PC-9 (cell line): ENCODE measurements at regions of chr21 and their contacts with region 1.

Region 1: GRCh38 chr21:36069713-36070573 is at the start of gene CBR1:
- DNase-seq: peak; percentile 76 to 86
- H3K4me3 ChIP-seq: peak within 1 kb of the TSS; percentile 78
- H3K27ac ChIP-seq: peak within 1 kb of the TSS; percentile 79
- H3K4me1 ChIP-seq: peaks cover 21% of the 10 kb centered on the region
- H3K27me3 ChIP-seq: no peaks in the 10 kb centered on the region
- CTCF ChIP-seq: no peak
- total RNA-seq, gene CBR1: 80.2 and 89.7 TPM in 2 replicates

Region 2: GRCh38 chr21:35366394-35367080 is 703.4 kb before region 1 on chr21:
- CTCF ChIA-PET with region 1: no interaction called
- POLR2A ChIA-PET with region 1: no interaction called
- intact Hi-C with region 1: no loop called
- DNase-seq: no peak
- H3K4me3 ChIP-seq: no peak overlapping the region
- H3K27ac ChIP-seq: no peak overlapping the region
- H3K4me1 ChIP-seq: peaks cover 6% of the 10 kb centered on the region
- H3K27me3 ChIP-seq: no peaks in the 10 kb centered on the region
- CTCF ChIP-seq: no peak

Region 3: DNA sequence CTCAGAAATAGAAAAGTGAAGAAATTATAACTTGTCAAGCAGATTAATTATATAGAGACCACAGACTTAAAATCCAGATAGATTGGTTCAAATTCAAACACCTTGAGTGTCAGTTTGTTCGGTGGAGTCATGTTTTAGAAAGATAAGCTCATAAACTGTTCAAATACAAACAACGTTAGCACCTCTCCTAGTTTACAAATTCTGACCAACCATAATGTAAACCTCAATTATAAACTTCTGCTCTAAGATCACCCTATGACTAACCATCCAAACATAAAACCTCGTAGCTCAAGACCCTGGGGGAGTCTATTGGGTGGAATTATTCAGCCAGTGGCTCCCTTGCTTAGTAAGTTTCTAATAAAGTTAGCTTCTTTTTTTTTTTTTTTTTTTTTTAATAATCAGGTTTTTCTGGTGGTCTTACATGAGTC is 12.3 kb after region 1 on chr21:
- CTCF ChIA-PET with region 1: no interaction called
- POLR2A ChIA-PET with region 1: interaction called, 10 read pairs
- intact Hi-C with region 1: no loop called
- DNase-seq: no peak
- H3K4me3 ChIP-seq: no peak overlapping the region
- H3K27ac ChIP-seq: no peak overlapping the region
- H3K4me1 ChIP-seq: no peaks in the 10 kb centered on the region
- H3K27me3 ChIP-seq: no peaks in the 10 kb centered on the region
- CTCF ChIP-seq: no peak